ENCODE measurements at regions of chrX and their contacts with region 1.

Region 1: GRCh38 chrX:15471016-15471415 is 22.1 kb downstream of the PIR start:
- DNase-seq: no peak
- H3K4me3 ChIP-seq: no peak overlapping the region
- H3K27ac ChIP-seq: no peak overlapping the region
- H3K4me1 ChIP-seq: peaks cover 0 to 5% (median 0%) of the 10 kb centered on the region in 4 donors
- H3K27me3 ChIP-seq: no peaks in the 10 kb centered on the region
- CTCF ChIP-seq: peak; percentile 67 to 71 (median 69)
- EP300 ChIP-seq: no peak
- POLR2A ChIP-seq: no peak

Region 2: DNA sequence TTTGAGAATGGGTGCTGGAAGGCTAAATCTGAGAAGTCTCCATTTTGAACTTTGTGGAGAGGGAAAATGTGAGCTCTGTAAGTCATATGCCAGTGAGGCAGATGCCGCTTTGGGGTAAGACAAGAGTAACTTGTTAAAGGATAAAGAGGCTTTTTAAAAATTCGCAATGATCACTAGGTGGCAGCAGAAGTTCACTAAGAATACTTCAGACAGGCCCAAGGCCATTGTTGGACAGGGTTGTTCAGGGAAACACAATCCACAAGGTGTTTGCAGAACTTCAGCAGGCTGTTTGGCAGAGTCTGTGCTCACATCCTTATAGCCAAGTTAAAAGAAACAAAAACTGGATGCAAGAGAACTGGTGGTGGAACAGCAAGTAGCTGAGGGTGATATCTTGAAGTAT is 122.0 kb before region 1 on chrX:
- intact Hi-C with region 1: loop called (anchors 5 kb)
- DNase-seq: no peak
- H3K4me3 ChIP-seq: no peak overlapping the region
- H3K27ac ChIP-seq: no peak overlapping the region
- H3K4me1 ChIP-seq: no peaks in the 10 kb centered on the region
- H3K27me3 ChIP-seq: no peaks in the 10 kb centered on the region
- CTCF ChIP-seq: peak; percentile 47 to 48 (median 48)
- EP300 ChIP-seq: no peak
- POLR2A ChIP-seq: no peak

Region 3: DNA sequence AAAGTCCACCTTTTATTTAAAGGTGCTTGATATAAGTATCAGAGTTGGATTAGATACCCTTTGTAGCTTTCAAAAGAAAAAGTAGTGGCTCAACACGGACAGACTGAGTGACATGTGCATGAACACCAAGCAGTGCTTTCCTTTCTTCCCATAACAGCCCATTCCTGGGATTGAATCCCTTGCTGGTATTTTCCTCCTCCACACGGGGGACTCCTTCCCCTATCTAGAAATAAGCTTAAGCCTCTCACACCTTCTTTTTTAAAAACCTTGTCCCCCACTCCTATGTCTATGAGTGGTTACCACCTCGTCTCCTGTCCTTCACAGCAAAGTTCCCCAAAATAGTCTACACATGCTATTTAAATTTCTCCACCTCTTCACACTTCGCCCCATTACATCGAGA is 378.5 kb after region 1 on chrX:
- intact Hi-C with region 1: no loop called
- DNase-seq: no peak
- H3K4me3 ChIP-seq: no peak overlapping the region
- H3K27ac ChIP-seq: peak overlapping the region; percentile 45 to 76 (median 55)
- H3K4me1 ChIP-seq: peaks cover 6 to 62% (median 38%) of the 10 kb centered on the region in 4 donors
- H3K27me3 ChIP-seq: no peaks in the 10 kb centered on the region
- CTCF ChIP-seq: peak in 2 of 3 experiments; percentile 16 to 39
- EP300 ChIP-seq: no peak
- POLR2A ChIP-seq: no peak

Region 4: DNA sequence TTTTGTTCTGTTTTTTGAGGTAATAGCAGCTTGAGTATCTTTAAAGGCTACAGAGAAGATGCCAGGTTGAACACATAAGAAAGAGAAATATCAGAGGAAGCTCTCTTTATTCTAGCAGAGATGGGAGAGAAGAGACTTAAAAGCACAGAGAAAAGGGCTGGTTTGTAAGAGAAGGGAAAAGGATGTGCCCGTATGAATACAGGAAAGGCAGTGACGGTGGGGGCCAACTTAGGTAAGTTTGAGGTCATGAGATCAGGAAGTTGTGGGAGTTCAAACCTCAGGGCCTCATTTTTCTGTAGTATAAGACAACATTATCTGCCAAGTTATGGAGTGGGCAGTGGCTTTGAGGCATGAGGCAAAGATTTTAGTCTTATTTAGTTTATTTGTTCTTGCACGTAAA is 1057.6 kb after region 1 on chrX:
- intact Hi-C with region 1: no loop called
- DNase-seq: no peak
- H3K4me3 ChIP-seq: no peak overlapping the region
- H3K27ac ChIP-seq: no peak overlapping the region
- H3K4me1 ChIP-seq: no peaks in the 10 kb centered on the region
- H3K27me3 ChIP-seq: no peaks in the 10 kb centered on the region
- CTCF ChIP-seq: no peak
- EP300 ChIP-seq: no peak
- POLR2A ChIP-seq: no peak